ENCODE measurements at regions of chr12 and their contacts with region 1.

Region 1: DNA sequence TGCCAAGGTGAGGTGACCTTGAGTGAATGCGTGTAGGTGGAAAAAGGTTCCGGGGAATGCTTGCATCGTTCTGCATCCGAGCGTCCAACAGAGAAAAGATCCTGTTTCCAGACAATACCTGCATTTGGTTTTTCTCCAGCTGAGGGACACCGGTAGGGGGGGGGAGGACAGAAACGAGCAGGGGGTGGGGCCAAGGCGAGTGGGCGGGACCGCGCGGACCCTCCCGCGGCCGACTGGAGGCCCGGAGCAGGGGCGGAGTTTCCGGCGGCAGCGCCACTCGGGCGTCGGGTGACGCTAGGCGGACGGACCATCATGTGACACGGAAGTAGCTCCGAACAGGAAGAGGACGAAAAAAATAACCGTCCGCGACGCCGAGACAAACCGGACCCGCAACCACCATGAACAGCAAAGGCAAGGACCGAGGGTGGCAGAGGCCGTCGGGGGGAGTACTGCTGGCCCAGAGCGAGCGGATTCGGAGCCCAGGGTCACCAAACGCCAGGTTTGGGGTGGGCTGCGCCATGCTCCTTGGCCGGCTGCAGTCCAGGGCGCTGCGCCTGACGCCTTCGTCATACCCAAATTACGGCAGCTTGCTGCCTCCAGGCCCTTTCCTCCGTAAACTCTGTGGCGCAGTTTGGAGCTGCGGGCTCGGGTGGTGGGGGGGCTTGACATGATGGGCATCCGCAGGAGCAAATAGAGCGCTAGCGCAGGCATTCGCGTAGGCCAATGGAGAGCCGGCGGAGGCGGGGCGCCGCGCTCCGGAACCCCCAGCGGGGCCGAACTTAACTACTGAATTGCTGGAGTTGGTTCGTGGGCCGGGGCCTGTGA is at the start of gene DAZAP2:
- DNase-seq: peak; percentile 94 to 97
- ATAC-seq: peak; percentile 94 to 96
- H3K4me3 ChIP-seq: peak within 1 kb of the TSS; percentile 94 to 100 (median 97)
- H3K27ac ChIP-seq: peak within 1 kb of the TSS; percentile 98 to 100 (median 100)
- H3K4me1 ChIP-seq: peaks cover 19 to 26% of the 10 kb centered on the region in 2 donors
- H3K27me3 ChIP-seq: no peaks in the 10 kb centered on the region
- CTCF ChIP-seq: peak; percentile 6 to 49 (median 17)
- POLR2A ChIP-seq: peak; percentile 92 to 98
- total RNA-seq, gene DAZAP2: 204 to 274 (median 246) TPM

Region 2: GRCh38 chr12:51217968-51218606 is 20.6 kb before region 1 on chr12 and contains the start of gene POU6F1:
- in situ Hi-C with region 1: no loop called
- intact Hi-C with region 1: loop called (anchors 1 kb)
- DNase-seq: peak; percentile 52 to 77
- ATAC-seq: peak; percentile 87 to 88
- H3K4me3 ChIP-seq: peak within 1 kb of the TSS; percentile 85 to 98 (median 89)
- H3K27ac ChIP-seq: peak within 1 kb of the TSS; percentile 98 to 100 (median 99)
- H3K4me1 ChIP-seq: peaks cover 17 to 19% of the 10 kb centered on the region in 2 donors
- H3K27me3 ChIP-seq: no peaks in the 10 kb centered on the region
- CTCF ChIP-seq: peak; percentile 31 to 92 (median 65)
- POLR2A ChIP-seq: peak; percentile 68 to 74
- total RNA-seq, gene POU6F1: 8.1 to 11.1 (median 9.9) TPM

Measured in gastrocnemius medialis (tissue), 4 donors.